HCT116 (cell line): ENCODE measurements at regions of chr2 and their contacts with region 1.

Region 1: GRCh38 chr2:84970868-84971509 is at the start of gene KCMF1:
- DNase-seq: no peak
- ATAC-seq: peak; percentile 80
- H3K4me3 ChIP-seq: peak within 1 kb of the TSS; percentile 75 to 90
- H3K27ac ChIP-seq: peak within 1 kb of the TSS; percentile 98
- H3K4me1 ChIP-seq: peaks cover 22 to 60% of the 10 kb centered on the region in 2 experiments
- H3K27me3 ChIP-seq: no peaks in the 10 kb centered on the region
- CTCF ChIP-seq: no peak
- POLR2A ChIP-seq: no peak
- RAD21 ChIP-seq: no peak
- total RNA-seq, gene KCMF1: 119 TPM

Region 2: GRCh38 chr2:84362541-84362940 is 608.4 kb before region 1 on chr2:
- CTCF ChIA-PET with region 1: no interaction called
- POLR2A ChIA-PET with region 1: no interaction called
- RAD21 ChIA-PET with region 1: no interaction called
- intact Hi-C with region 1: no loop called
- DNase-seq: no peak
- ATAC-seq: no peak
- H3K4me3 ChIP-seq: no peak overlapping the region
- H3K27ac ChIP-seq: no peak overlapping the region
- H3K4me1 ChIP-seq: no peaks in the 10 kb centered on the region
- H3K27me3 ChIP-seq: 0 out of 2 replicates have a peak, but pooled peaks cover 3% of the 10 kb centered on the region
- CTCF ChIP-seq: no peak
- POLR2A ChIP-seq: no peak
- RAD21 ChIP-seq: no peak

Region 3: DNA sequence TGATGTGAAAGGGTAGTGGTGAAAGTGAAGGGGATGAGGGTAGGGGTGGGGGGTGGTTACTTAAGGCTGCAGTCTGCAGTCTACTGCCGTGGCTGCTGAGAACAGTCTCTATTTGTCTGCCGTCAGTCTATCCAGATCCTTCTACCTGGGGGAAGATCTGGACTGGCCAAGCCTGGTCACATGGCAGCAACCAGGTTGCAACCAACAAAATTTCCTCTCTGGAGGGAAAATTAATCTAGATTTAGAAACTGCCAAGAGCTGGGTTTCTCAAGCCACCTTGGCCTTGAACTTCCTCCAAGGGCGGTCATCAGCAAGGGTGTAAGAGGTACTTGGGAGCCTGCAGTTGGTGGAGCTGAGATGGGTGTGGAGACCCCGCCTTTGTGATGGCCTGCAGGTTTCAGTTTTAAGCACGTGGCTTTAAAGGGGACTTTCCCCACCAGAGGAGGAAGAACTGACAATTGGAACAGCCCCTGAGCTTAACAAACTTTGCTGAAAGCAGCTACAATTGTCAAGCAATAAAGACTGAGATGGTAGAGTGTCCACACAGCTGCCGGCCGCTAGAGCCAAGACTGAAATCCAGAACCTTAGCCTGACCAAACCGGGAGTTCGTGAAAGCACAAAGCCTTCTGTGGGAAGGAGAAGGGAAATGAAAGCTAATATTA is 31.4 kb before region 1 on chr2:
- CTCF ChIA-PET with region 1: no interaction called
- POLR2A ChIA-PET with region 1: no interaction called
- RAD21 ChIA-PET with region 1: no interaction called
- intact Hi-C with region 1: no loop called
- DNase-seq: no peak
- ATAC-seq: no peak
- H3K4me3 ChIP-seq: no peak overlapping the region
- H3K27ac ChIP-seq: no peak overlapping the region
- H3K4me1 ChIP-seq: peaks cover 15 to 88% of the 10 kb centered on the region in 2 experiments
- H3K27me3 ChIP-seq: no peaks in the 10 kb centered on the region
- CTCF ChIP-seq: no peak
- POLR2A ChIP-seq: no peak
- RAD21 ChIP-seq: no peak

Region 4: DNA sequence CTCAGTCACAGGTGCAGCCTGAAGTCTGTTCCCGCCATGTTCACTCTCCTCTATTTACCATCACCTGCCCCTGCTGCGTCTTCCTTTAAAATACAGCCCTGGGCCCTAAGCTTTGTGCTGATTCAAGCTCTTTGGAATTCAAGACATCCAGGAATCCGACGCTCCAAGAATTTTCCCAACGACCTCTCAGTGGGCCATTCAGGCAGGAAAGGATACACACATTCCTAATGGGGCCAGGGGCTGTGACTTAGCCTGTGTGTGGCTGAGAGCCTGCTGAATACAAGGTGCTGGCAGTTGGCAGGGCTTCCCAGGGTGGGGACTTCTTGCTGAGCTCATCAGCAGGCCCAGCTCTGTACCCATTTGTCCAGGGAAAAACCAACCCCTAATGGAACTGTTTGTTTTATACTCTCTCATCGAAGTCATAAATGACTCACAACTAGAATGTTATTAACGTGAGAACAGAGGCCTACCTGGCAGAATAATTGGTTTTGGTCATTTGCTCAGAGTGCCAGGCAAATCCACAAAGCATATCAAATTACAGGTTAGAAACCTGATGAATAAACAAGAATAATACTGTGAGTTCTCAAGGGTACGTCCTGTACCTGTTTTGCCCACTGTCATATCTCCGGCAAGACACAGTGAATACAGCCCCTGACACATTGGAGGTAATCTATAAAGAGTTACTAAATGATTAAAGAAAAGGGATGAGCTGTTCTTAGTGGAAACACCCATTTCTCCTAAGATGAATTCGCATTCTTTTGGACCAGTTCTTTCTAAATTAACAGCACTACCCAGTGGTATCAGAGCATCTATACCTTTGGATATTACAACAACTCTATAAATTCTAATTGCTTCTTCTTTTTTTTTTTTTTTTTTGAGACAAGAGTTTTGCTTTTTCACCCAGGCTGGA is 12.6 kb before region 1 on chr2:
- CTCF ChIA-PET with region 1: interaction called, 4 read pairs
- POLR2A ChIA-PET with region 1: interaction called, 24 read pairs
- RAD21 ChIA-PET with region 1: no interaction called
- intact Hi-C with region 1: no loop called
- DNase-seq: peak; percentile 93
- ATAC-seq: peak; percentile 87
- H3K4me3 ChIP-seq: peak overlapping the region; percentile 11 to 45; a peak in 3 of 4 replicates
- H3K27ac ChIP-seq: peak overlapping the region; percentile 83
- H3K4me1 ChIP-seq: peaks cover 42 to 61% of the 10 kb centered on the region in 2 experiments
- H3K27me3 ChIP-seq: no peaks in the 10 kb centered on the region
- CTCF ChIP-seq: no peak
- POLR2A ChIP-seq: no peak
- RAD21 ChIP-seq: peak; percentile 26; the same call in 1 of the 2 replicates

Region 5: GRCh38 chr2:85011747-85012146 is 40.8 kb after region 1 on chr2:
- CTCF ChIA-PET with region 1: no interaction called
- POLR2A ChIA-PET with region 1: no interaction called
- RAD21 ChIA-PET with region 1: no interaction called
- intact Hi-C with region 1: loop called (anchors 5 kb)
- DNase-seq: no peak
- ATAC-seq: peak; percentile 56; the same call in 1 of the 2 replicates
- H3K4me3 ChIP-seq: no peak overlapping the region
- H3K27ac ChIP-seq: no peak overlapping the region
- H3K4me1 ChIP-seq: peaks cover 6 to 26% of the 10 kb centered on the region in 2 experiments; a peak in 3 of 4 replicates
- H3K27me3 ChIP-seq: no peaks in the 10 kb centered on the region
- CTCF ChIP-seq: peak in 2 of 3 experiments; percentile 40 to 46; a peak in 3 of 6 replicates
- POLR2A ChIP-seq: no peak
- RAD21 ChIP-seq: no peak